MCF 10A (cell line): ENCODE measurements at regions of chr3 and their contacts with region 1.

Region 1: DNA sequence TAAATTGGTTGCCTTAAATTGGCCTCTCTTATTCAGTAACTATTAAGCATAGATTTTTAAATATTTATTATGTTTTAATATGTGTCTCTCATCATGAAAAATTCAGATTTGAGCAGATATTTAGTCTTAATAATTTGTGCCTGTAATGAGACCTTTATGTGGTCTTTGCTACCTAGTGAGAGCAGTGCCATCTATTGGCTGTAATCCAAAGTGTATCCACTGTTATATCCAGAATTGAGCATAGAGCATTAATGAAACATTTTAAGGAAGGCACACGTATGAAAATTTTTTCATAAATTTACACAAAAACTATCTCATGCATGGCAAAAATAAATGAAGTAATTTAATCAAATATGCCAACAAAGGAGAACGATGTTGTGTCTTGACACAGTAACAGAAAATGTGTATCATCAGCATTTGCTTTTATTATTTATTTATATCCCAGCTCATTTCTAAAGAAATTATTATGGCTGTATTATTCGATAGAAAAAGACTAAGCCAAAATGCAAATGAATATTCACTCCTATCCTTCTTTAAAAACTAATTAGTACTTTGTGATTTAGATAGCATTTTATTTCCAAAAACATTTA is 203.5 kb downstream of the RSRC1 start:
- DNase-seq: peak; percentile 52
- H3K4me3 Mint-ChIP-seq: no peak overlapping the region
- H3K27ac Mint-ChIP-seq: peak overlapping the region; percentile 25
- H3K4me1 Mint-ChIP-seq: peaks cover 5% of the 10 kb centered on the region
- H3K27me3 Mint-ChIP-seq: no peaks in the 10 kb centered on the region
- CTCF ChIP-seq: peak; percentile 38

Region 2: GRCh38 chr3:158532099-158532734 is 218.8 kb after region 1 on chr3:
- CTCF ChIA-PET with region 1: interaction called, 3 read pairs
- POLR2A ChIA-PET with region 1: no interaction called
- intact Hi-C with region 1: loop called (anchors 1 kb)
- DNase-seq: peak; percentile 77
- H3K4me3 Mint-ChIP-seq: no peak overlapping the region
- H3K27ac Mint-ChIP-seq: no peak overlapping the region
- H3K4me1 Mint-ChIP-seq: peaks cover 7% of the 10 kb centered on the region
- H3K27me3 Mint-ChIP-seq: no peaks in the 10 kb centered on the region
- CTCF ChIP-seq: peak; percentile 64